Activated naive CD8-positive, alpha-beta T cell treated with anti-CD3 and anti-CD28 coated beads, Interleukin-2, amount 10 ng/mL, durations not matched to agents 7 days and 5 days (primary cell): ENCODE measurements at regions of chr16 and their contacts with region 1.

Region 1: GRCh38 chr16:31050280-31051030 is 17.1 kb downstream of the STX4 start:
- DNase-seq: no peak
- ATAC-seq: no peak
- H3K4me3 Mint-ChIP-seq: no peak overlapping the region
- H3K27ac Mint-ChIP-seq: no peak overlapping the region
- H3K4me1 Mint-ChIP-seq: peaks cover 14% of the 10 kb centered on the region
- H3K27me3 Mint-ChIP-seq: peaks cover 3% of the 10 kb centered on the region

Region 2: DNA sequence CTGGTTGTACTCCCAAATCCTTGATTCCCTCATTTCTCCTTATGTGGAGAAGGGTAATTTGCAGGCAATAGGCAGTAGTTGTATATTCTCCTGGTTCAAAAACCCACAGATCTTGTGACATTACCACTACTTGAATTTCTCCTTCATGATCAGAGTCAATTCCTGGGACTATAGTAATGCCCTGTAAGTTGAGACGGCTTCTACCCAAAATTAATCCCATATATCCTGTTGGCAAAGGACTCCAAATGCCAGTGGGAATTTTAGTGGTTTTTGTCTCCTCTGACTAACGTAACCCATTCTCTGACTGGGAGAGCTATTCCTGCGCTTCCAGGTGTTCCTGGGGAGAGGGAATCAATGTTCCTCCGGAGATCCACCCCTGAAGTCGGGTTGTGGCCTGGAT is 428.7 kb before region 1 on chr16:
- POLR2A ChIA-PET with region 1: interaction called, 11 read pairs
- DNase-seq: no peak
- ATAC-seq: no peak
- H3K4me3 Mint-ChIP-seq: no peak overlapping the region
- H3K27ac Mint-ChIP-seq: no peak overlapping the region
- H3K4me1 Mint-ChIP-seq: peaks cover 4% of the 10 kb centered on the region
- H3K27me3 Mint-ChIP-seq: peaks cover 12% of the 10 kb centered on the region